HCT116 (cell line): ENCODE measurements at regions of chr11 and their contacts with region 1.

Region 1: GRCh38 chr11:118263695-118264567 is at the start of gene MPZL2:
- DNase-seq: peak; percentile 65
- ATAC-seq: peak; percentile 94
- H3K4me3 ChIP-seq: peak within 1 kb of the TSS; percentile 59 to 64
- H3K27ac ChIP-seq: peak within 1 kb of the TSS; percentile 66
- H3K4me1 ChIP-seq: peaks cover 14 to 33% of the 10 kb centered on the region in 2 experiments; a peak in 3 of 4 replicates
- H3K27me3 ChIP-seq: no peaks in the 10 kb centered on the region
- CTCF ChIP-seq: no peak; a peak in 1 of 6 replicates
- POLR2A ChIP-seq: no peak
- RAD21 ChIP-seq: peak; percentile 29; the same call in 1 of the 2 replicates
- total RNA-seq, gene MPZL2: 16.8 TPM

Region 2: GRCh38 chr11:117932067-117932370 is 331.9 kb before region 1 on chr11:
- CTCF ChIA-PET with region 1: no interaction called
- POLR2A ChIA-PET with region 1: no interaction called
- RAD21 ChIA-PET with region 1: no interaction called
- intact Hi-C with region 1: no loop called
- DNase-seq: no peak
- ATAC-seq: no peak
- H3K4me3 ChIP-seq: no peak overlapping the region
- H3K27ac ChIP-seq: no peak overlapping the region
- H3K4me1 ChIP-seq: peaks cover 14% of the 10 kb centered on the region in 2 experiments; a peak in 3 of 4 replicates
- H3K27me3 ChIP-seq: no peaks in the 10 kb centered on the region
- CTCF ChIP-seq: no peak
- POLR2A ChIP-seq: no peak
- RAD21 ChIP-seq: no peak

Region 3: DNA sequence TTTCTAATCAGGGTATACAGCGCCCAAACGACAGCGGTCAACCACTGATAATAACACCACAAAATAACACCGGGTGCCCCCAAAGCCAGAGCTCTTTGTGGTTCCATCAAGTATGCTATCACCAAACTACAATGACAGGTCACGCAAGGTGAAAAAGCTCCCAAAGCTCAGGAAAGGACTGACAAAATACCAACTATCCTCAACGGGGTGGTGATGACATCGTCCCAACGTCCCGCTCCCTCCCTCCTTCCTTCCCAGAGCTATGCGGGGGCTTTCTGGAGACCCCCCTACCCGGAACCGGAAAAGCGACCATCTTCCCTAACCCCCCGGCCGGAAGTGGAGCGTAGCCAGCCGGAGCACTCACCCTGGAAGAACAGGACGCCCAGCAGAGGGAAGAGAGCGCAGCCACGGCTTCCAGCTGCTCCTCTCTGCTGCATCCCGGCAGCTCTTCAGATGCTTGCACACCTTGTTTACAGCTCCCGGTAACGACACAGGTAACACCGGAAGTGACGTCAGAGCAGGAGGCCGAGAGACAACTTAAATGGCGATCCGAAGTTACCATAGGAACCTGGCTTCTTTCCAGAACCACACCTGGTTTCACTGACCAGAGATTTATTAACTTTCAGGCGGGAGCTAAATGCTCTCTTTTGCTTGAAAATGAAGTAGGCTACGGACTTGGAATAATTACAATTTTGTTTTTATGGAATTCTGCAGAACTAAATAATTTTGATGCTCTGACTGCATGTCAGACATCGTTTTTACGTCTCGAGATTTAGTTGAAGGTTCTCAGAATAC is 11.9 kb before region 1 on chr11 and contains the start of gene MPZL3:
- CTCF ChIA-PET with region 1: no interaction called
- POLR2A ChIA-PET with region 1: interaction called, 10 read pairs
- RAD21 ChIA-PET with region 1: no interaction called
- intact Hi-C with region 1: no loop called
- DNase-seq: peak; percentile 96
- ATAC-seq: peak; percentile 91
- H3K4me3 ChIP-seq: peak within 1 kb of the TSS; percentile 73 to 78
- H3K27ac ChIP-seq: peak within 1 kb of the TSS; percentile 94
- H3K4me1 ChIP-seq: peaks cover 5 to 14% of the 10 kb centered on the region in 2 experiments; a peak in 3 of 4 replicates
- H3K27me3 ChIP-seq: no peaks in the 10 kb centered on the region
- CTCF ChIP-seq: no peak
- POLR2A ChIP-seq: peak; percentile 80
- RAD21 ChIP-seq: no peak
- total RNA-seq, gene MPZL3: 8.7 TPM